CD4-positive, alpha-beta memory T cell (primary cell): ENCODE measurements at regions of chr10 and their contacts with region 1.

Region 1: DNA sequence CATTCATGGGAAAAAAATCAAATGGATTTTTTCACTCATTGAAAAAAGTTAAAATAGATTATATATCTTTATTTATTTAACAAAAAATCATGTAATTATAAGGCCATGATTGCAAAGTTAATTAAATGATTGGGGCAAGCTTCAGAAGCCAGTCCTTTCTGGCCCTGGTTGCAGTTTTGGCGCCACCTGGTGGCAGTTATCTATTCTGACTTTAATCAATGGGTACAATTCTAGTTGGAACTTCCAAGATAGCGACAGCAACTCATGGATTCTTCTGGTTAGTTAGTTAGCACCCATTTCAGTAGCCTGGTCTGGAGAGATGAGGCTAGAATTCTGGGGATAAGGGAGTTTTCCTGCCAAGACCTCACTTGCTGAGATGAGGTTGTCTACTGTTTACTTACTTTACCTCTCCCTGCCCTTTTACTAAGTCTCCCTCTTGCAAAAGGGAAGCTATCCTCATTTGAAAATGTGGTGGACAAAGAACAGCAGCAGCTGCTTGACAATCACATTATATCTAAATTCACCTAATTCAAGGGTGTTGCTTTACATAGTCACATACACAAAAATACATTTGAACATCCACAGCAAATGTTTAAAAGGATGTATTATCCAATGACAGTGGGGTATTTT is 42.3 kb downstream of the NOC3L start:
- DNase-seq: peak; percentile 44 to 53 (median 47)
- H3K4me3 ChIP-seq: no peak overlapping the region
- H3K4me3 Mint-ChIP-seq: no peak overlapping the region
- H3K27ac ChIP-seq: no peak overlapping the region
- H3K27ac Mint-ChIP-seq: no peak overlapping the region
- H3K4me1 ChIP-seq: no peaks in the 10 kb centered on the region
- H3K4me1 Mint-ChIP-seq: no peaks in the 10 kb centered on the region
- H3K27me3 ChIP-seq: no peaks in the 10 kb centered on the region
- H3K27me3 Mint-ChIP-seq: no peaks in the 10 kb centered on the region

Region 2: GRCh38 chr10:94279835-94280709 is 40.3 kb before region 1 on chr10:
- CTCF ChIA-PET with region 1: interaction called, 18 read pairs
- POLR2A ChIA-PET with region 1: no interaction called
- intact Hi-C with region 1: loop called (anchors 1 kb)
- DNase-seq: peak in 4 of 5 donors; percentile 35 to 44 (median 40)
- H3K4me3 ChIP-seq: no peak overlapping the region
- H3K4me3 Mint-ChIP-seq: no peak overlapping the region
- H3K27ac ChIP-seq: no peak overlapping the region
- H3K27ac Mint-ChIP-seq: no peak overlapping the region
- H3K4me1 ChIP-seq: no peaks in the 10 kb centered on the region
- H3K4me1 Mint-ChIP-seq: peaks cover 0 to 7% (median 5%) of the 10 kb centered on the region in 4 donors
- H3K27me3 ChIP-seq: no peaks in the 10 kb centered on the region
- H3K27me3 Mint-ChIP-seq: peaks cover 6 to 15% of the 10 kb centered on the region in 2 donors

Region 3: GRCh38 chr10:94334857-94335256 is 14.5 kb after region 1 on chr10:
- CTCF ChIA-PET with region 1: interaction called, 59 read pairs
- POLR2A ChIA-PET with region 1: no interaction called
- intact Hi-C with region 1: no loop called
- DNase-seq: no peak
- H3K4me3 ChIP-seq: no peak overlapping the region
- H3K4me3 Mint-ChIP-seq: no peak overlapping the region
- H3K27ac ChIP-seq: no peak overlapping the region
- H3K27ac Mint-ChIP-seq: no peak overlapping the region
- H3K4me1 ChIP-seq: no peaks in the 10 kb centered on the region
- H3K4me1 Mint-ChIP-seq: peaks cover 0 to 1% (median 0%) of the 10 kb centered on the region in 4 donors
- H3K27me3 ChIP-seq: no peaks in the 10 kb centered on the region
- H3K27me3 Mint-ChIP-seq: no peaks in the 10 kb centered on the region

Region 4: DNA sequence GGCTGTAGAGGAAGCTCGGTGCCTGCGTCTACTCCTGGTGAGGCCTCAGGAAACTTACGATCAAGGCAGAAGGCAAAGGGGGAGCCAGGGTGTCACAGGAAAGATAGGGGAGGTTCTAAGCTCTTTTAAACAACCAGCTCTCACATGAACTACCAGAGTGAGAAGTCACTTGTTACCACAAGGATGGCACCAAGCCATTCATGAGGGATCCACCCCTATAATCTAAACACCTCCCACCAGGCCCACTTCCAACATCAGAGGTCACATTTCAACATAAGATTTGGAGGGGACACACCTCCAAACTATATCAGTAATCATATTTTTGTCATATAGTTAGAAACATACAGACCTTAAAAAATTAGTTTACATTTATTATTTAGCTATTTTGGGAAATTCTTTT is 32.9 kb after region 1 on chr10:
- CTCF ChIA-PET with region 1: interaction called, 19 read pairs
- POLR2A ChIA-PET with region 1: no interaction called
- intact Hi-C with region 1: no loop called
- DNase-seq: no peak
- H3K4me3 ChIP-seq: no peak overlapping the region
- H3K4me3 Mint-ChIP-seq: no peak overlapping the region
- H3K27ac ChIP-seq: no peak overlapping the region
- H3K27ac Mint-ChIP-seq: no peak overlapping the region
- H3K4me1 ChIP-seq: no peaks in the 10 kb centered on the region
- H3K4me1 Mint-ChIP-seq: peaks cover 0 to 3% (median 1%) of the 10 kb centered on the region in 4 donors
- H3K27me3 ChIP-seq: no peaks in the 10 kb centered on the region
- H3K27me3 Mint-ChIP-seq: no peaks in the 10 kb centered on the region